K562 (cell line): ENCODE measurements at regions of chr2 and their contacts with region 1.

Region 1: DNA sequence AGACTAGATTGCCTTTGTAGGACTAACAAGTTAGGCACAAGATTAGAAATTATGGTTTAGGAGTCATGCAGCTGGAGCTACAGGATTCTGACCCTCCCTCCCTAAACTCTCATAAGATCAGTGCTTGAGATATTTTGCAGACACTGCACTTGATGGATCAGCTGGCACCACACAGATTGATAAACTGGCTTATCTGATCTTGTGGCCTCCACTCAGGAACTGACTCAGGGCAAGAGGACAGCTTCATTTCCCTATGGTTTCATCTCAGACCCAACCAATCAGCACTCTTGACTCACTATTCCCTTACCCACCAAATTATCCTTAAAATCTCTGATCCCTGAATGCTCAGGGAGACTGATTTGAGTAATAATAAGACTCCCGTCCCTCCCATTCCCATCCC is 152.3 kb downstream of the DIS3L2 start:
- DNase-seq: no peak
- ATAC-seq: no peak
- H3K4me3 ChIP-seq: no peak overlapping the region
- H3K27ac ChIP-seq: no peak overlapping the region
- H3K4me1 ChIP-seq: no peaks in the 10 kb centered on the region
- H3K27me3 ChIP-seq: no peaks in the 10 kb centered on the region
- CTCF ChIP-seq: no peak
- EP300 ChIP-seq: no peak
- POLR2A ChIP-seq: no peak
- RAD21 ChIP-seq: no peak

Region 2: DNA sequence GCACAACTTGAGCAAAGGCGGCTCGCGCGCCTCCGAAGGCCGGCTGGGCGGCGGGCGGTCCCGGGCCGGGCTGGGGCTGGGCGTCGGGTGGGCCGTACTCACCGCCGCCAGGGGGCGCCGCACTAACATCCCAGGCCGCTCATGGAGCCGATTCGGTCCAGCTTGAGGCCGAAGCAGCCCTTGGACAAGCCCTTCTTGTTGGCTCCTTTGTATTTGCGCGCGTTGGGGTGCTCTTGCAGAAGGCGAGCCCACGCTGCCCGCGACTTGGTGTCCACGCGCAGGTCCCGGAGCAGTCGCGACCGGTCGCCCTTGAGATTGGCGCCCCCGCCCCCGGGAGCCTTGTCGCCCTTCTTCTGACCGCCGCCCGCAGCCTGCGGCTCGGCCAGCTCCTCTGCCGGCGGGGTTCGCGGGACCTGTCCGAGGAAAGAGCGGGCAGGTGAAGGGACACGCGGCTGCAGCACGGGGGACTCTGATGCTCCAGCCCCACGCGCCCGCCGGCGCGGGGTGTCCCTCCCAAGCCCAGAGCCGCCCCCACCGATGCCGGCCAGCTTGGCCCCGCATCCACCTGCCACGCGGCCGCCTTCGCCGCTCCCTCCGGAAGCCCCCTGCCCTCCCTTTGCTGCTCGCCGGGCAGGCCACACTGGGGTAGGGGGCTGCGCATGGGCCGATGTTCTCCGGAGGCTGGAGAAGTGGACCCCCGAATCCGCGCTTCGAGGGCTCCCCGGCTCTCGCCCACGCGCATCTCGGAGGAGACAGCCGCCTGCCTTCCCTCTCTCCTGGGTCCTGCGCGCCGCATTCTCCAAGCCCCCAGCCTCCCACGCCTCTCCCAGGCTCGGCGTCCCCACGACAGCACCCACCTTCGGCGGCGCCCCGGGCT is 188.3 kb before region 1 on chr2:
- CTCF ChIA-PET with region 1: no interaction called
- POLR2A ChIA-PET with region 1: no interaction called
- in situ Hi-C with region 1: no loop called
- intact Hi-C with region 1: no loop called
- DNase-seq: peak; percentile 77 to 84 (median 82)
- ATAC-seq: peak; percentile 94
- H3K4me3 ChIP-seq: peak overlapping the region; percentile 34
- H3K27ac ChIP-seq: no peak overlapping the region
- H3K4me1 ChIP-seq: peaks cover 0 to 30% of the 10 kb centered on the region in 2 experiments; a peak in 3 of 5 replicates
- H3K27me3 ChIP-seq: peaks cover 30 to 58% of the 10 kb centered on the region in 2 experiments
- CTCF ChIP-seq: peak; percentile 67 to 85 (median 69)
- EP300 ChIP-seq: no peak
- POLR2A ChIP-seq: no peak
- RAD21 ChIP-seq: peak; percentile 68 to 77

Region 3: GRCh38 chr2:231940795-231941194 is 173.0 kb before region 1 on chr2:
- CTCF ChIA-PET with region 1: no interaction called
- POLR2A ChIA-PET with region 1: no interaction called
- in situ Hi-C with region 1: loop called (anchors 10 kb)
- intact Hi-C with region 1: no loop called
- DNase-seq: no peak
- ATAC-seq: no peak
- H3K4me3 ChIP-seq: no peak overlapping the region
- H3K27ac ChIP-seq: no peak overlapping the region
- H3K4me1 ChIP-seq: peaks cover 0 to 3% of the 10 kb centered on the region in 2 experiments; a peak in 1 of 5 replicates
- H3K27me3 ChIP-seq: peaks cover 0 to 5% of the 10 kb centered on the region in 2 experiments; a peak in 2 of 5 replicates
- CTCF ChIP-seq: no peak
- EP300 ChIP-seq: no peak
- POLR2A ChIP-seq: no peak
- RAD21 ChIP-seq: no peak

Region 4: DNA sequence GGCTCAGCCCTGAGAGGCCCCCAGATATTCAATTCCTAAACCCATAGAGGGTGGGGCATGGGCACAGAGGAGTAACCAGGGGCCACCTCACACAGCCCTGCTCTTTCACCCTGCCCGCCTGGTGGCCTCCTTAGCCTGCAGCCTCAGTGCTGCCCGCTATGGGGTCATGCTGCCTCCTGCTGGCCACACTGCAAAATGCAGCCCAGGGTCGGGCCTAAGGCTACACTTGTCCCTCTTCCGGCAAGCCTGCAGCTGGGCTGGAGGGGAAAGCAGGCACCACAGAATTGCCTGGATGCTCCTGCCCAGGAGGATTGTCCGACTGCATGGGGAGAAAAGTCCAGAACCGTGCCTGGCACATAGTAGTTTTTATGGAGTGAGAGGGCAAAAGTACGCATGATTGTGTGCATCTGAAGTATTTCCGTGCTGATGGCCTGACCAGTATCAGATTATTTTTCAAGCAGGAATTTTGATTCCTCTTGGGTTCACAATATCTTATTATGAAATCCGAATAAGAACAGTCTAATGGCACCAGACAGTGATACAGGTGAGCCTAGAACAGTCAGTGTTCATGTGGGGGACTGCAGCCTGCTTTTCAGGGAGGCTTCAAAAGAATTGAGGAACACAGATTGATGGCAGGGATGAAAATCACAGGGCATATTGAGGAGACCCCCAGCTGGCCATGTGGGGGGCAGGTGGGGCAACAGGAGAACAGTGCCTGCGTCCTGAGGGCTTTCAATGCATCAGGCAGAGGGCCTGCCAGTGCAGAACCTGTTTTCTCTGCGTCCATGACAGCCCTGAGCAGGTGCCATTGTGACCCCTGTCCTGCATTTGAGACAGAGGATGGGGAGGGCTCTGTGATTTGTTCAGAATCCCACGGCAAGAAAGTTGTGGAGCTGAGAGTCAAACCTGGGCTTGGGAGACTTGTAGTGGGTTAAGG is 213.6 kb after region 1 on chr2:
- CTCF ChIA-PET with region 1: no interaction called
- POLR2A ChIA-PET with region 1: no interaction called
- in situ Hi-C with region 1: no loop called
- intact Hi-C with region 1: no loop called
- DNase-seq: peak; percentile 57 to 68 (median 66)
- ATAC-seq: peak; percentile 93
- H3K4me3 ChIP-seq: no peak overlapping the region
- H3K27ac ChIP-seq: no peak overlapping the region
- H3K4me1 ChIP-seq: peaks cover 0 to 12% of the 10 kb centered on the region in 2 experiments; a peak in 2 of 5 replicates
- H3K27me3 ChIP-seq: no peaks in the 10 kb centered on the region
- CTCF ChIP-seq: peak; percentile 72 to 90 (median 73)
- EP300 ChIP-seq: no peak
- POLR2A ChIP-seq: no peak
- RAD21 ChIP-seq: peak; percentile 42 to 72; a peak in 3 of 4 replicates